Activated CD8-positive, alpha-beta T cell treated with anti-CD3 and anti-CD28 coated beads for 36 hours (primary cell): ENCODE measurements at regions of chr9 and their contacts with region 1.

Region 1: DNA sequence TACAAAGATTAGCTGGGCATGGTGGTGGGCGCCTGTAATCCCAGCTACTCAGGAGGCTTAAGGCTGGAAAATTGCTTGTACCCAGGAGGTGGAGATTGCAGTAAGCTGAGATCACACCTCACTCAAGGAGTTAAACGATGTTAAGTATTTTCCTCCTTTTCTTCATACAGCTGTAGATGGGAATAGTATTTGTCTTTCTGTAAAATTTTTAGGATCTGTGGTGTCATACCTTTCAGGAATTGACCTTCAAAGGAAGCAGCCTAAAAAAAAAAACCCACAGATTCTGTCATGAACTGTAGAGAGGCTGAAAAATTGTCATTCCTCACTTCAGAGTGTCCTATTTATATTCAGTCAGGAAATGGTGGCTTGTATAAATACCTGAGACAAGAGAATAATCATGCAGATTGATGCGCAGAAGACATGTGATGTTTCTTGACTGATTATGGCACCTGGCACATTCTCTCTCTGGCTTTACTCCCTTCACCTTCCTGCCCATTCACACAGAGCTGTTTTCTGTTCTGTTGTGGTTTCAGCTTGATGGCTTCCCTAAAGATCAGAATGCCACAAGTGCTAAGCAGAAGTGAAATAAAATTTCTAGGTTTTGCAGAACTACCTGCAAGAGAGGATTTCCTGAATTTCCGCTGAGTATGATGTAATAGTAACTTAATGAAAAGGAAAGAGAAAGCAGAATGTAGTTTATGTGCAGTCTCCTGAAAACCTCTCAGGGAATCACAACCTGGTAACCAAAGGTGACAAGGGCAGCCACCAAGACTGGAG is 3.8 kb downstream of the IFNA1 start:
- DNase-seq: peak; percentile 11
- ATAC-seq: peak; percentile 74
- H3K4me3 Mint-ChIP-seq: peak overlapping the region; percentile 0
- H3K27ac Mint-ChIP-seq: no peak overlapping the region
- H3K4me1 Mint-ChIP-seq: peaks cover 13% of the 10 kb centered on the region
- H3K27me3 Mint-ChIP-seq: no peaks in the 10 kb centered on the region
- CTCF ChIP-seq: no peak

Region 2: DNA sequence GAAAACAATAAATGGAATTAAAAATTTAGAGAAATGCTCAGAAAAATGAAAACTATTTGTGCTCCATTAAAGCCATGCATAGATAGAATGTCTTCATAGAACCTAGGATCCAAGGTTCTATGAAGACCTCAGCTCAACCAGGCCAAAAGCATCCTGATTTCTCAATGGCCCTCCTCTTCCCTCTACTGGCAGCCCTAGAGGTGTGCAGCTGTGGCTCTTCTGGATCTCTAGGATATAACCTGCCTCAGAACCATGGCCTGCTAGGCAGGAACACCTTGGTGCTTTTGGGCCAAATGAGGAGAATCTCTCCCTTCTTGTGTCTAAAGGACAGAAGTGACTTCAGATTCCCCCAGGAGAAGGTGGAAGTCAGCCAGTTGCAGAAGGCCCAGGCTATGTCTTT is 11.3 kb after region 1 on chr9:
- CTCF ChIA-PET with region 1: interaction called, 10 read pairs
- POLR2A ChIA-PET with region 1: no interaction called
- intact Hi-C with region 1: no loop called
- DNase-seq: peak; percentile 20
- ATAC-seq: peak; percentile 82
- H3K4me3 Mint-ChIP-seq: no peak overlapping the region
- H3K27ac Mint-ChIP-seq: no peak overlapping the region
- H3K4me1 Mint-ChIP-seq: no peaks in the 10 kb centered on the region
- H3K27me3 Mint-ChIP-seq: peaks cover 4% of the 10 kb centered on the region
- CTCF ChIP-seq: peak; percentile 63